CD14-positive monocyte (primary cell): ENCODE measurements at regions of chr3 and their contacts with region 1.

Region 1: GRCh38 chr3:150870396-150870795 is 34.8 kb downstream of the MINDY4B start:
- DNase-seq: no peak
- H3K4me3 ChIP-seq: no peak overlapping the region
- H3K4me3 Mint-ChIP-seq: no peak overlapping the region
- H3K27ac ChIP-seq: no peak overlapping the region
- H3K27ac Mint-ChIP-seq: no peak overlapping the region
- H3K4me1 ChIP-seq: peaks cover under 1 to 3% of the 10 kb centered on the region in 2 donors
- H3K4me1 Mint-ChIP-seq: peaks cover 8% of the 10 kb centered on the region
- H3K27me3 ChIP-seq: no peaks in the 10 kb centered on the region
- H3K27me3 Mint-ChIP-seq: peaks cover 0 to 4% (median 2%) of the 10 kb centered on the region in 3 donors
- CTCF ChIP-seq: no peak

Region 2: GRCh38 chr3:150528354-150528797 is 342.0 kb before region 1 on chr3:
- intact Hi-C with region 1: loop called in 1 of 2 experiments (anchors 10 kb)
- DNase-seq: peak in 2 of 3 donors; percentile 17 to 48
- H3K4me3 ChIP-seq: no peak overlapping the region
- H3K4me3 Mint-ChIP-seq: no peak overlapping the region
- H3K27ac ChIP-seq: no peak overlapping the region
- H3K27ac Mint-ChIP-seq: no peak overlapping the region
- H3K4me1 ChIP-seq: no peaks in the 10 kb centered on the region
- H3K4me1 Mint-ChIP-seq: peaks cover 1% of the 10 kb centered on the region
- H3K27me3 ChIP-seq: no peaks in the 10 kb centered on the region
- H3K27me3 Mint-ChIP-seq: peaks cover 0 to 4% (median 1%) of the 10 kb centered on the region in 3 donors
- CTCF ChIP-seq: peak; percentile 67

Region 3: DNA sequence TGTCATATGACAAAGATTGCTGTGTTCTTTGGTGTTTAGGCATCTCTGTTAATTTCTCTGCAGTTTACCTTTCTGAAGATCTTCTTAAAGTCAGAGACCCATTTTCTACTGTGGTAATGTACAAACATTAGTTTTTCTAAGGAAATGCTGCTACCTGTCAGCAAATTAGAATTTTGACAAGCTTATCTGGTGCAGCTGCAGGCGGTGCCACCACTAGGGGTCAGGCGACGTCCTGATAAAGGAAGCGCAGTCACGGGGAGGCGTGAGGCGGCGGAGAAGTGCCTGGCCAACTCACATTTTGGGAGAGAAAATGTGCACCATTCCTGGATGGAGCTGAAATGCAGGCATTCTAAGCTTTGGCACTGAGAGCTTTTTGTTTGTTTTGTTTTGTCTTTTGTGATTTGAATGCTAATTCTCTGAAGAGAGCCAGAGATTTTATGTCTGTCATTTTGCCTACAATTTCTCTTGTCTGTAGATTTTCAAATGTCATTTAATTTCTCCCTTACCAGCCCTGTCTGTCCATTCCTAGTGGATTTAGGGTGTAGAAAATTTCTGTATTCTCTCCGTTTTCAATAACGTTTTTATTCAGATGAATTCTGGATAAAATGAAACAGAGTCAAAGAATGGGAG is 82.5 kb before region 1 on chr3:
- intact Hi-C with region 1: loop called (anchors 5 to 10 kb)
- DNase-seq: peak; percentile 65 to 76 (median 76)
- H3K4me3 ChIP-seq: no peak overlapping the region
- H3K4me3 Mint-ChIP-seq: no peak overlapping the region
- H3K27ac ChIP-seq: no peak overlapping the region
- H3K27ac Mint-ChIP-seq: no peak overlapping the region
- H3K4me1 ChIP-seq: no peaks in the 10 kb centered on the region
- H3K4me1 Mint-ChIP-seq: peaks cover 3% of the 10 kb centered on the region
- H3K27me3 ChIP-seq: peaks cover 3% of the 10 kb centered on the region in 2 donors
- H3K27me3 Mint-ChIP-seq: peaks cover 6 to 9% (median 7%) of the 10 kb centered on the region in 3 donors
- CTCF ChIP-seq: peak; percentile 94

Region 4: DNA sequence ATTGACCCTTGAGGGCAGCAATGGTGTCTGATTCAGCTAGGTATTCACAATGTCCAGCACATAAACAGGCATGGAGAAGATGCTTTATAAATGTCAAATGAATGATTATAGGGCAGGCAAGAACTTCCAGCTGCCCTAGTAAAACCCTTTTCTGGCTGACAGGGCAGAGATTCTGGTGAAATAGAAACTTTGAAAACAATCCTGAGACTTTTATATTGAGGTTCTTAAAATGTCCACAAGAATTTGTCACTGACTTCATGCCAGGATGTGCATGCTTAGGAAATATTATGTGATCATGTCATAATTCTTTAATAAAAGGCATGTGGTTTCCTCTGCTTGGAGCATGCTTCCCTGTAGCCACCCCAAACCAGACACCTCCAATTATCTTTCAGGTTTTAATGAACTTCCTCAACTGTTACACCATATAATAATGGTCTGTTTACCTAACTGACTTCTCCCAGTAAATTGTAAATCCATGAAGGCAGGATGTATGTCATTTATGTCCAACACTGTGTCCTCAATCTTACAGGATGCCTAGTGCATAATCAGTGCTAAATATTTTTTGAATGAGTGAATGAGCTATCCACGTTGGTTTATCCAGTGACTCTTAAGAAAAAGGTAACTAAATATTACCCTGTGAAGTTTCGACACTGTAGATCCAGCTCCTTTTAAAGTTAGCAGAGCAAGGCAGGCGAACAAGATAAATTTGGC is 145.5 kb after region 1 on chr3:
- intact Hi-C with region 1: no loop called
- DNase-seq: no peak
- H3K4me3 ChIP-seq: no peak overlapping the region
- H3K4me3 Mint-ChIP-seq: no peak overlapping the region
- H3K27ac ChIP-seq: no peak overlapping the region
- H3K27ac Mint-ChIP-seq: peak overlapping the region in 1 of 7 donors; percentile 7
- H3K4me1 ChIP-seq: peaks cover 0 to 10% of the 10 kb centered on the region in 2 donors
- H3K4me1 Mint-ChIP-seq: peaks cover 12% of the 10 kb centered on the region
- H3K27me3 ChIP-seq: no peaks in the 10 kb centered on the region
- H3K27me3 Mint-ChIP-seq: peaks cover 0 to 3% (median 0%) of the 10 kb centered on the region in 3 donors
- CTCF ChIP-seq: no peak

Region 5: DNA sequence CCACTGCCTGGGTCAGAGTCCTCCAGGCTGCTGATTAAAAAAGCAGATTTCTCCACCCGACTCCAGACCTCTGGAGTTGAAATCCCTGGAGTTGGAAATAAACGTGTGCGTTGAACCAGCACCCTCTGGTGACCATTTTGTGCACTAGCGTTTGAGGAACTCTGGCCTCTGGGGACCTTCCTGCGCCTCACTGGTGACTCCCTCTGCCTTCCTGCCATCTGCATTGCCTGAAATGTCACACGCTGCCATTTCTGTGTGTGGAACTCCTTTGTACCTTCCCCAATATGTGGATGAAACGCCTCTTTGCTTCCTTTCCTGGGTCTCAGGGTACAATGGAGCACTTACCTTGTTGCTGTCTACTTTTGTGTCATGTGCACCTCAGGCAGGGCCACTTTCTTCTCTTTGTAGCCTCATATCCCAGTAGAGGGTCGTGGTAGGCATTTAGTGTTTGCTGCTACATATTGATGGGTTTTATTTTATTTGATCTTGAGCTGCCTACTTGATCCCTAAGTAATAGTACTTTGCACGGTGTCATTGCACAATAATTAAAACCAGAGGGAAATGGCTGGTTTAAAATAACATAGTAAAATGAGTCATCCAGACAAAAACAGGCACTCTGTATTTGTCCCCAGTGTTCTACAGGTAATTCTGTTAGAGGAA is 275.8 kb after region 1 on chr3:
- intact Hi-C with region 1: loop called in 1 of 2 experiments (anchors 10 kb)
- DNase-seq: peak; percentile 67 to 83 (median 78)
- H3K4me3 ChIP-seq: peak overlapping the region in 1 of 3 experiments; percentile 43
- H3K4me3 Mint-ChIP-seq: no peak overlapping the region
- H3K27ac ChIP-seq: peak overlapping the region in 1 of 2 donors; percentile 47
- H3K27ac Mint-ChIP-seq: peak overlapping the region in 1 of 7 donors; percentile 17
- H3K4me1 ChIP-seq: peaks cover 12 to 14% of the 10 kb centered on the region in 2 donors
- H3K4me1 Mint-ChIP-seq: no peaks in the 10 kb centered on the region
- H3K27me3 ChIP-seq: no peaks in the 10 kb centered on the region
- H3K27me3 Mint-ChIP-seq: peaks cover 0 to 4% (median 4%) of the 10 kb centered on the region in 3 donors
- CTCF ChIP-seq: peak; percentile 90

Region 6: GRCh38 chr3:152183473-152183872 is 1313.1 kb after region 1 on chr3:
- intact Hi-C with region 1: no loop called
- DNase-seq: peak in 2 of 3 donors; percentile 36 to 50
- H3K4me3 ChIP-seq: no peak overlapping the region
- H3K4me3 Mint-ChIP-seq: no peak overlapping the region
- H3K27ac ChIP-seq: no peak overlapping the region
- H3K27ac Mint-ChIP-seq: peak overlapping the region in 1 of 7 donors; percentile 54
- H3K4me1 ChIP-seq: peaks cover 7 to 15% of the 10 kb centered on the region in 2 donors
- H3K4me1 Mint-ChIP-seq: peaks cover 39% of the 10 kb centered on the region
- H3K27me3 ChIP-seq: no peaks in the 10 kb centered on the region
- H3K27me3 Mint-ChIP-seq: peaks cover 0 to 2% (median 0%) of the 10 kb centered on the region in 3 donors
- CTCF ChIP-seq: peak; percentile 25